ENCODE measurements at regions of chr2 and their contacts with region 1.

Region 1: DNA sequence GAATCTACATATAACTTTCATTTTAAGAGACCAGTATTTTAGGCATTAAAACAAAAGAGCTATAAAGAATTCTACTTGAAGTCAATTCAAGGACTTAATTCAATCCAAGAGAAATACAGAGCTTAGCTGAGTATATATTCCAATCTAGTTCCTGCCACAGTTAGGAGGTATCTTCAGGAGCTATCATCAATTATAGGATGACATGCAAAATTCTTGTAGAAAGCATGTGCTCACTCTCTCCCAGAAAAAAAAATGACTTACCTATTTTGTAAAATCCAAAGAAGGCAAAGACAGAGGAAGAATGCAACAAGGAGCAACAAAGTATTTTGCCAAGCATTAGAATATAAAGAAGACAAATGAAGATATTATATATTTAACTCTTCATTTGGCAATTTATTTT is 31.8 kb upstream of the CFAP36 start:
- DNase-seq: no peak
- H3K4me3 ChIP-seq: no peak overlapping the region
- H3K27me3 ChIP-seq: no peaks in the 10 kb centered on the region; the same call in 1 of the 2 replicates
- CTCF ChIP-seq: no peak

Region 2: DNA sequence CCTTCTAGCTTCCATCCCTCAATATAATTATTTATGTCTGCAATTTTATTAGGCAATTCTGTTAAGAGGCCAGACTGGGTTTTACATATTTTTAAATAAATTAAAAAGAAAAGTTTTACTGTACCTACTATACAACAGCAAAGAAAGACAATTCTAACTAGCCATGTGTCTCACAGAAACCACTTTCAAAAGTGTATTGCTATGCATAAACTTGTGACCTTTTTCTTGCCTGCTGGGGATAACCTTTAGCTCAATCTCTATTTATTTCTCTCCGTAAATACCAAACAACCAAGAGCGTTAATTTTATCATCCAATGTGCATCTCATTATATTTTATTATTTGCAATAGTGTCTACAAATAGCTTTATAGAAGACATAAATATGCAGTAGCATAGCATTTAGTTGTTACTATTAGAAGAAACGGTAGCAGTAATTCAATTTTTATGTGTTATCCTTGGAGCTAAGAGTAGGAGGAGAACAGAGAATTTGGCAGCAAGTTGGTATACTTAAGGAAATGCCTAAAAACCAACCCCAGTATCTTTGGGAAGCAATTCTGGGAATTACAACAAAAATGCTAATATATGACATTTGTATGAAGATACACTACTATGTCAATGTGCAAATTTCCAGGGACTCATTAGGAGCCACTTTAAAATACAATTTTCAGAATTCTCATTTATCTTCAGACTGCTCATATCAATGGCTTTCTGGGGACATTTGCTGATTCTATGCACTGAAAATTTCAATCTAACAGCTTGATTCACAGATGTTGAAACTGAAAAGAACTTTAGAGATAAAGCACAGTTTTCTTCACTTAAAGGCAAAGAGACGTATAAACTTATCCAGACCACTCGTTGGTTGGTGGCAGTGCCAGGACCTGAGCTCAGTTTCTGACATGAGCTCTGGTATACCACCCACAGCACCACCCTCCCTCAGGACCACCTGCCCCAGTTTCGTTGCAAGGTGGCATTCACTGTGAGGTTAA is 414.4 kb before region 1 on chr2:
- CTCF ChIA-PET with region 1: no interaction called
- POLR2A ChIA-PET with region 1: no interaction called
- DNase-seq: no peak
- H3K4me3 ChIP-seq: no peak overlapping the region
- H3K27me3 ChIP-seq: no peaks in the 10 kb centered on the region
- CTCF ChIP-seq: no peak

Region 3: DNA sequence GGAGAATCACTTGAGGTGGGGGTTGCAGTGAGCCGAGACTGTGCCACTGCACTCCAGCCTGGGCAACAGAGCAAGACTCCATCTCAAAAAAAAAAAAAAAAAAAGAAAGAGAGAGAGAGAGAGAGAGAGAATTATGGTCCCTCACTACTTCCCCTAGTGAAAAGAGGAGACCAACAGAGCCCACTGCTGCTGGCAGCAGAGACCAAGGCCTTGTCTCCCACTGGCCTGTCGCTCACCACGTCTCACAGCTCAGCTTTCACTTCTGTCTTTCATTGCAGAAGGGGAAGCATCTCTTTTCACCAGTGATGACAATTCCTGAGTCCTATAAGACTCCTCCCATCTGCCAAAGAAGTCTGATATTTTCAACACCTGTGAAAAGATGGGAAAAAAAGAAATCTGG is 336.9 kb before region 1 on chr2:
- CTCF ChIA-PET with region 1: no interaction called
- POLR2A ChIA-PET with region 1: no interaction called
- DNase-seq: no peak
- H3K4me3 ChIP-seq: no peak overlapping the region
- H3K27me3 ChIP-seq: no peaks in the 10 kb centered on the region
- CTCF ChIP-seq: no peak

Region 4: GRCh38 chr2:55498582-55498981 is 10.9 kb after region 1 on chr2:
- CTCF ChIA-PET with region 1: interaction called, 10 read pairs
- POLR2A ChIA-PET with region 1: no interaction called
- DNase-seq: no peak
- H3K4me3 ChIP-seq: no peak overlapping the region
- H3K27me3 ChIP-seq: no peaks in the 10 kb centered on the region
- CTCF ChIP-seq: no peak

Region 5: GRCh38 chr2:55620123-55620779 is 132.6 kb after region 1 on chr2:
- CTCF ChIA-PET with region 1: no interaction called
- POLR2A ChIA-PET with region 1: no interaction called
- DNase-seq: no peak
- H3K4me3 ChIP-seq: no peak overlapping the region
- H3K27me3 ChIP-seq: no peaks in the 10 kb centered on the region
- CTCF ChIP-seq: peak; percentile 38; the same call in 1 of the 2 replicates

Region 6: DNA sequence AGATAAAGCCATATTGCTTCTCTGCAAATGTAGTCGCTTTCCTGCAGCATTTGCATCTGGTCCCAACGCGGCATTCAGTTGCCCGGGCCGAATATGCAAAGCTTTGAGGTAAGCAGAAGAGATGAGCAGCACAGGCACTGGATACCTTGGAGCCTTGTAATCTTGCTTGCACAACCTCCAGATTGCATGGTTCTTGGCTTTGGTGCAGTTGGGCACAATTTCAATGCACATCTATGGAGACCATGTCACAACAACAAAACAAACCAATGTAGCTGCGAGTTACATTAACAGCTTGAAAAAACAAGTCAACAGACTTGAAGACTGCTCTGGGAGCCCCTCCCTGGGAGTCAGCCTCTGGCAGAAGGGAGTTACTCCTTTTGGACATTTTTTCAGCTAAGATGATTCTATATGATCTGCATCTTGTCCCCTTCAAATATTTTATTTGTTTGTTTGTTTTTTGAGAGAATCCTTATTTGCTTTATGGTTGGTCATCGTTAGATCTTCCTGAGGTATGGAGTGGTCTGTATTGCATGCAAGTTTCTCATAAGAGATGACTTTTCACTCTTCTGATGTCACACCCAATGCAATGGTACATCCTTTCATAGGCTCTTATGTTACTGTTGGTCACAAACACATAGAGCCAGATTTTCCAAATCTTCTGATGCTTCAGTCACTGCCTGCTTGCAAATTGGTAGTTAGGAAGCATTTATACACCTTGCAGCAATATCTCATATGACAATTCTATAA is 322.4 kb after region 1 on chr2:
- CTCF ChIA-PET with region 1: no interaction called
- POLR2A ChIA-PET with region 1: no interaction called
- DNase-seq: no peak
- H3K4me3 ChIP-seq: no peak overlapping the region
- H3K27me3 ChIP-seq: no peaks in the 10 kb centered on the region
- CTCF ChIP-seq: no peak

Measured in BJ (cell line).